Dendritic cell treated with granulocyte-macrophage colony-stimulating factor and Interleukin-4, amounts not matched to agents 40 ng/mL and 50 ng/mL, for 4 days (primary cell): ENCODE measurements at regions of chr6 and their contacts with region 1.

Region 1: GRCh38 chr6:10429638-10430427 is 15.0 kb upstream of the TFAP2A start:
- H3K4me3 Mint-ChIP-seq: no peak overlapping the region
- H3K27ac Mint-ChIP-seq: no peak overlapping the region
- H3K4me1 Mint-ChIP-seq: peaks cover 23% of the 10 kb centered on the region
- H3K27me3 Mint-ChIP-seq: peaks cover 60% of the 10 kb centered on the region

Region 2: DNA sequence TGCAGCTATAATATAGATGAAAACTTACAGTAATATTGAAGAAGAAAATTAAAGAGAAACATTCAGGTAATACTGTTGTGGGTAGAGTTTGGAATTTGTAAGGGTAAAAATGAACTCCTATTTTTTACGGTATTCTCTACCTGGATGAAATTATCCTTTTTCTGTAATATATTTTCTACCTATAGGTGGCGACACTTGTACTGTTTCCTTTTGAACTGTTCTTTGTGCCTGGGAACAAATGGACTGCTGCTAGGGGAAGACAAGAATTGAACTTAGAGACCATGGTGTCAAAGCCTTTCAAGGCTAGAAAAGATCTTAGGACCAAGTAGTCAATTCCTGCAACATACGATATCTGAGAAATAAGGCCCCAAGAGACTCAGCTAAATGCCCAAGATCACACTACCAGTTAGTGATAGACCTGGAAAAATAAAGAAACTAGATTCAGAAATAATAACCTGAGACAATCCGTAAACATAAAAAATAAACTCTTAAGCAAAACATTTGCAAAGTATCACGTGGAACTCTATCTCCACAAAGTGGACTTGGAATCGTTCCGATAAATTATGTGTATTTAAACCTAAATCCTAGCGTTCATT is 398.8 kb before region 1 on chr6:
- intact Hi-C with region 1: loop called (anchors 2 kb)
- H3K4me3 Mint-ChIP-seq: no peak overlapping the region
- H3K27ac Mint-ChIP-seq: no peak overlapping the region
- H3K4me1 Mint-ChIP-seq: no peaks in the 10 kb centered on the region
- H3K27me3 Mint-ChIP-seq: peaks cover 8% of the 10 kb centered on the region

Region 3: GRCh38 chr6:10256113-10256690 is 173.6 kb before region 1 on chr6:
- intact Hi-C with region 1: loop called (anchors 5 kb)
- H3K4me3 Mint-ChIP-seq: no peak overlapping the region
- H3K27ac Mint-ChIP-seq: no peak overlapping the region
- H3K4me1 Mint-ChIP-seq: no peaks in the 10 kb centered on the region
- H3K27me3 Mint-ChIP-seq: peaks cover 4% of the 10 kb centered on the region

Region 4: GRCh38 chr6:11525468-11526155 is 1095.8 kb after region 1 on chr6:
- intact Hi-C with region 1: no loop called
- H3K4me3 Mint-ChIP-seq: no peak overlapping the region
- H3K27ac Mint-ChIP-seq: peak overlapping the region; percentile 30
- H3K4me1 Mint-ChIP-seq: peaks cover 31% of the 10 kb centered on the region
- H3K27me3 Mint-ChIP-seq: no peaks in the 10 kb centered on the region